Cardiac septum (tissue), 1 donor: ENCODE measurements at regions of chr5 and their contacts with region 1.

Region 1: GRCh38 chr5:83401122-83401731 is 70.3 kb upstream of the VCAN start:
- DNase-seq: no peak

Region 2: DNA sequence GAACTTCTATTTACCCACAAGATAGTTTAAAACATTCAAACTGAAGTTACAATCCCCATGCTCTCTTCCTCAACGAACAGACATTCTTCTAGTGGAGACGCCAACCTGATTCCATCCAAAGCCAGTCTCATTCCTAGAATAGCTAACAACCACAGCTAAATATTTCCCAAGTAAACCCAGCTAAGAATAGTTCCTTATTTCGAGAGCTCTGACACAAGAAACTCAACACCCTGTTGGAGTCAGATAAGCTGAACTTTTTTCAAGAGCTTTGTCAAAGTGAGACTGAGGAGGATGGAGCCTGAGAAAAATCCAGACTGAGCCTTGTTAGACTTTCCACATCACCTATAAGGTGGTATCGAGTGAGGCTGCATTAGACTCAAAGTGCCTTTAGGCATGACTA is 1066.4 kb before region 1 on chr5:
- intact Hi-C with region 1: loop called (anchors 10 kb)
- DNase-seq: no peak

Region 3: GRCh38 chr5:83095957-83096539 is 305.2 kb before region 1 on chr5:
- intact Hi-C with region 1: loop called (anchors 5 kb)
- DNase-seq: no peak